PC-3 (cell line): ENCODE measurements at regions of chr5 and their contacts with region 1.

Region 1: DNA sequence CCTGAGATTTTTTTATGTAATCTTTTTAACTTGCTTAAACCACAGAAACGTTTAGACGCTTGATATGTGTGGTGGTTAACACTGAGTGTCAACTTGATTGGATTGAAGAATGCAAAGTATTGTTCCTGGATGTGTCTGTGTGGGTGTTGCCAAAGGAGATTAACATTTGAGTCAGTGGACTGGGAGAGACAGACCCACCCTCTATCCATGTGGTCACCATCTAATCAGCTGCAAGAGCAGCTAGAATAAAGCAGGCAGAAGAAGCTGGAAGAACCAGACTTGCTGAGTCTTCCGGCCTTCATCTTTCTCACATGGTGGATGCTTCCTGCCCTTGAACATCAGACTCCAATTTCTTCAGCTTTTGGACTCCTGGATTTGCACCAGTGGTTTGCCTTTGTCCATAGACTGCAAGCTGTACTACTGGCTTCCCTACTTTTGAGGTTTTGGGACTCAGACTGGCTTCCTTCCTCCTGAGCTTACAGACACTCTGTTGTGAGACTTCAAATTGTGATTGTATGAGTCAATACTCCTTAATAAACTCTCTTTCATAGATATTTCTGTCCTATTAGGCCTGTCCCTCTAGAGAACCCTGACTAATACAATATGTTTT is 816.0 kb upstream of the CDH9 start:
- DNase-seq: peak; percentile 39
- ATAC-seq: peak; percentile 77
- H3K4me3 ChIP-seq: no peak overlapping the region
- H3K27ac ChIP-seq: no peak overlapping the region
- H3K4me1 ChIP-seq: peaks cover 6% of the 10 kb centered on the region; the same call in 1 of the 2 replicates
- H3K27me3 ChIP-seq: no peaks in the 10 kb centered on the region
- CTCF ChIP-seq: no peak

Region 2: GRCh38 chr5:27682599-27682998 is 171.7 kb before region 1 on chr5:
- CTCF ChIA-PET with region 1: no interaction called
- POLR2A ChIA-PET with region 1: no interaction called
- intact Hi-C with region 1: no loop called
- DNase-seq: peak; percentile 40
- ATAC-seq: peak; percentile 49; the same call in 1 of the 2 replicates
- H3K4me3 ChIP-seq: no peak overlapping the region
- H3K27ac ChIP-seq: no peak overlapping the region
- H3K4me1 ChIP-seq: no peaks in the 10 kb centered on the region
- H3K27me3 ChIP-seq: no peaks in the 10 kb centered on the region
- CTCF ChIP-seq: peak; percentile 52

Region 3: GRCh38 chr5:27818888-27819287 is 35.5 kb before region 1 on chr5:
- CTCF ChIA-PET with region 1: no interaction called
- POLR2A ChIA-PET with region 1: no interaction called
- intact Hi-C with region 1: no loop called
- DNase-seq: peak; percentile 48
- ATAC-seq: peak; percentile 75
- H3K4me3 ChIP-seq: no peak overlapping the region
- H3K27ac ChIP-seq: no peak overlapping the region
- H3K4me1 ChIP-seq: 0 out of 2 replicates have a peak, but pooled peaks cover 10% of the 10 kb centered on the region
- H3K27me3 ChIP-seq: no peaks in the 10 kb centered on the region
- CTCF ChIP-seq: no peak

Region 4: GRCh38 chr5:27906911-27907590 is 52.7 kb after region 1 on chr5:
- CTCF ChIA-PET with region 1: no interaction called
- POLR2A ChIA-PET with region 1: no interaction called
- intact Hi-C with region 1: loop called (anchors 2 kb)
- DNase-seq: peak; percentile 70
- ATAC-seq: peak; percentile 80
- H3K4me3 ChIP-seq: peak overlapping the region; percentile 15; the same call in 1 of the 2 replicates
- H3K27ac ChIP-seq: peak overlapping the region; percentile 53
- H3K4me1 ChIP-seq: peaks cover 29% of the 10 kb centered on the region
- H3K27me3 ChIP-seq: no peaks in the 10 kb centered on the region
- CTCF ChIP-seq: no peak

Region 5: GRCh38 chr5:27947088-27947487 is 92.7 kb after region 1 on chr5:
- CTCF ChIA-PET with region 1: no interaction called
- POLR2A ChIA-PET with region 1: no interaction called
- intact Hi-C with region 1: no loop called
- DNase-seq: peak; percentile 40
- ATAC-seq: peak; percentile 29; the same call in 1 of the 2 replicates
- H3K4me3 ChIP-seq: no peak overlapping the region
- H3K27ac ChIP-seq: no peak overlapping the region
- H3K4me1 ChIP-seq: no peaks in the 10 kb centered on the region
- H3K27me3 ChIP-seq: no peaks in the 10 kb centered on the region
- CTCF ChIP-seq: no peak